Endothelial cell of umbilical vein (primary cell): ENCODE measurements at regions of chr3 and their contacts with region 1.

Region 1: GRCh38 chr3:35908366-35909232 is 269.3 kb downstream of the ARPP21 start:
- DNase-seq: peak; percentile 84
- H3K4me3 ChIP-seq: no peak overlapping the region
- H3K27ac ChIP-seq: no peak overlapping the region
- H3K4me1 ChIP-seq: no peaks in the 10 kb centered on the region
- H3K27me3 ChIP-seq: peaks cover 2 to 5% of the 10 kb centered on the region in 2 experiments
- CTCF ChIP-seq: peak; percentile 64 to 73
- POLR2A ChIP-seq: no peak

Region 2: GRCh38 chr3:33980252-33980651 is 1928.3 kb before region 1 on chr3:
- CTCF ChIA-PET with region 1: interaction called, 19 read pairs
- POLR2A ChIA-PET with region 1: no interaction called
- dilution Hi-C with region 1: no loop called
- intact Hi-C with region 1: loop called (anchors 1 kb)
- DNase-seq: peak; percentile 31
- H3K4me3 ChIP-seq: no peak overlapping the region
- H3K27ac ChIP-seq: no peak overlapping the region
- H3K4me1 ChIP-seq: no peaks in the 10 kb centered on the region
- H3K27me3 ChIP-seq: peaks cover 0 to 2% of the 10 kb centered on the region in 2 experiments
- CTCF ChIP-seq: peak; percentile 41 to 44
- POLR2A ChIP-seq: no peak

Region 3: DNA sequence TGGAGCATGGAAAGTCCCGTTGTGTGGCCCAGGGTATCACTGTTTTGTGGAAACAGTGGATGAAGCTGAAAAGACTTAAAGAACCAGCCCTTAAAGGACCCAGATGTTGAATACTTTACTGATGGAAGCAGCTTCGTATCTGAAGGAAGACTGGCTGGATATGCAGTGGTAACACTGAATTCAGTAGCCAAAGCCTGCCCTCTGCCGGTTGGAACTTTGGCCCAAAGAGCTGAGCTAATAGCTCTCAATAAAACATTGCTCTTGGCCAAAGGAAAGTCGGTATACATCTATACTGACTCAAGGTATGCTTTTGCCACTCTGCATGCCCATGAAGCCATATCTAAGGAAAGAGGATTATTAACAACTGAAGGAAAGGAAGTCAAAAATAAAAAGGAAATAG is 1224.7 kb before region 1 on chr3:
- CTCF ChIA-PET with region 1: interaction called, 16 read pairs
- POLR2A ChIA-PET with region 1: no interaction called
- dilution Hi-C with region 1: no loop called
- intact Hi-C with region 1: no loop called
- DNase-seq: peak; percentile 42
- H3K4me3 ChIP-seq: no peak overlapping the region
- H3K27ac ChIP-seq: no peak overlapping the region
- H3K4me1 ChIP-seq: no peaks in the 10 kb centered on the region
- H3K27me3 ChIP-seq: no peaks in the 10 kb centered on the region
- CTCF ChIP-seq: peak; percentile 39 to 58
- POLR2A ChIP-seq: no peak

Region 4: GRCh38 chr3:35894735-35895134 is 13.9 kb before region 1 on chr3:
- CTCF ChIA-PET with region 1: interaction called, 15 read pairs
- POLR2A ChIA-PET with region 1: no interaction called
- dilution Hi-C with region 1: no loop called
- intact Hi-C with region 1: no loop called
- DNase-seq: no peak
- H3K4me3 ChIP-seq: no peak overlapping the region
- H3K27ac ChIP-seq: no peak overlapping the region
- H3K4me1 ChIP-seq: no peaks in the 10 kb centered on the region
- H3K27me3 ChIP-seq: no peaks in the 10 kb centered on the region
- CTCF ChIP-seq: no peak
- POLR2A ChIP-seq: no peak

Region 5: DNA sequence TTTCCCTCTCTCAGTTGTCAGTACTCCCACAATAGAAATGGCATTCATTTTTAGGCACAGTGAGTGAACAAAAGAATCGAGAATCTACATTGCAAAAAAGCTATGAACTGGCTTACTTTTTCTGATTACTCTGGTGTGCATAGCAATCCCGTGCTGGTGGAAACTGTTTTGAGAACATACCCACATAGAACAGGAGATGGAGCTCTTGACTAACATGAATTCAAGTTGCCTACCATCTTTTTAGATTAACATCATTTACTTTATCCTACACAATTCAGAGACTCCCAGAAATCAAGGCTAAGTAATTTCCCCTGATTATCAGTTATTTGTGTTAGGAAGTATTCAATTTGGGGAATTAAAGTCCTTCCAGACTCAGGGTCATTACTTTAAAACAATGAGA is 57.3 kb after region 1 on chr3:
- CTCF ChIA-PET with region 1: interaction called, 11 read pairs
- POLR2A ChIA-PET with region 1: no interaction called
- dilution Hi-C with region 1: no loop called
- intact Hi-C with region 1: no loop called
- DNase-seq: peak; percentile 38
- H3K4me3 ChIP-seq: no peak overlapping the region
- H3K27ac ChIP-seq: no peak overlapping the region
- H3K4me1 ChIP-seq: no peaks in the 10 kb centered on the region
- H3K27me3 ChIP-seq: peaks cover 2 to 7% of the 10 kb centered on the region in 2 experiments
- CTCF ChIP-seq: peak; percentile 17 to 23
- POLR2A ChIP-seq: no peak